ENCODE measurements at regions of chr20 and their contacts with region 1.

Region 1: GRCh38 chr20:1180949-1181348 is 3.8 kb downstream of the TMEM74B start:
- DNase-seq: no peak
- ATAC-seq: no peak
- H3K4me3 ChIP-seq: no peak overlapping the region
- H3K27ac ChIP-seq: no peak overlapping the region
- H3K4me1 ChIP-seq: no peaks in the 10 kb centered on the region
- H3K27me3 ChIP-seq: peaks cover 9 to 17% (median 11%) of the 10 kb centered on the region in 3 donors
- CTCF ChIP-seq: no peak
- POLR2A ChIP-seq: no peak

Region 2: GRCh38 chr20:1165941-1166340 is 15.0 kb before region 1 on chr20:
- in situ Hi-C with region 1: no loop called
- intact Hi-C with region 1: loop called (anchors 1 kb)
- DNase-seq: no peak
- ATAC-seq: no peak
- H3K4me3 ChIP-seq: no peak overlapping the region
- H3K27ac ChIP-seq: no peak overlapping the region
- H3K4me1 ChIP-seq: peaks cover 0 to 8% of the 10 kb centered on the region in 2 donors
- H3K27me3 ChIP-seq: no peaks in the 10 kb centered on the region
- CTCF ChIP-seq: no peak
- POLR2A ChIP-seq: no peak

Measured in gastrocnemius medialis (tissue), 4 donors.